ENCODE measurements at regions of chr9 and their contacts with region 1.

Region 1: GRCh38 chr9:11194246-11194645 is 581.4 kb upstream of the PTPRD start:
- DNase-seq: no peak
- H3K4me3 ChIP-seq: no peak overlapping the region
- H3K4me3 Mint-ChIP-seq: no peak overlapping the region
- H3K27ac ChIP-seq: no peak overlapping the region
- H3K27ac Mint-ChIP-seq: no peak overlapping the region
- H3K4me1 ChIP-seq: no peaks in the 10 kb centered on the region
- H3K4me1 Mint-ChIP-seq: no peaks in the 10 kb centered on the region
- H3K27me3 ChIP-seq: no peaks in the 10 kb centered on the region
- H3K27me3 Mint-ChIP-seq: no peaks in the 10 kb centered on the region
- CTCF ChIP-seq: no peak

Region 2: GRCh38 chr9:11356067-11356466 is 161.8 kb after region 1 on chr9:
- intact Hi-C with region 1: loop called in 1 of 2 experiments (anchors 5 kb)
- DNase-seq: no peak
- H3K4me3 ChIP-seq: no peak overlapping the region
- H3K4me3 Mint-ChIP-seq: no peak overlapping the region
- H3K27ac ChIP-seq: no peak overlapping the region
- H3K27ac Mint-ChIP-seq: no peak overlapping the region
- H3K4me1 ChIP-seq: no peaks in the 10 kb centered on the region
- H3K4me1 Mint-ChIP-seq: no peaks in the 10 kb centered on the region
- H3K27me3 ChIP-seq: no peaks in the 10 kb centered on the region
- H3K27me3 Mint-ChIP-seq: no peaks in the 10 kb centered on the region
- CTCF ChIP-seq: no peak

Measured in CD14-positive monocyte (primary cell).